ENCODE measurements at regions of chr17 and their contacts with region 1.

Region 1: DNA sequence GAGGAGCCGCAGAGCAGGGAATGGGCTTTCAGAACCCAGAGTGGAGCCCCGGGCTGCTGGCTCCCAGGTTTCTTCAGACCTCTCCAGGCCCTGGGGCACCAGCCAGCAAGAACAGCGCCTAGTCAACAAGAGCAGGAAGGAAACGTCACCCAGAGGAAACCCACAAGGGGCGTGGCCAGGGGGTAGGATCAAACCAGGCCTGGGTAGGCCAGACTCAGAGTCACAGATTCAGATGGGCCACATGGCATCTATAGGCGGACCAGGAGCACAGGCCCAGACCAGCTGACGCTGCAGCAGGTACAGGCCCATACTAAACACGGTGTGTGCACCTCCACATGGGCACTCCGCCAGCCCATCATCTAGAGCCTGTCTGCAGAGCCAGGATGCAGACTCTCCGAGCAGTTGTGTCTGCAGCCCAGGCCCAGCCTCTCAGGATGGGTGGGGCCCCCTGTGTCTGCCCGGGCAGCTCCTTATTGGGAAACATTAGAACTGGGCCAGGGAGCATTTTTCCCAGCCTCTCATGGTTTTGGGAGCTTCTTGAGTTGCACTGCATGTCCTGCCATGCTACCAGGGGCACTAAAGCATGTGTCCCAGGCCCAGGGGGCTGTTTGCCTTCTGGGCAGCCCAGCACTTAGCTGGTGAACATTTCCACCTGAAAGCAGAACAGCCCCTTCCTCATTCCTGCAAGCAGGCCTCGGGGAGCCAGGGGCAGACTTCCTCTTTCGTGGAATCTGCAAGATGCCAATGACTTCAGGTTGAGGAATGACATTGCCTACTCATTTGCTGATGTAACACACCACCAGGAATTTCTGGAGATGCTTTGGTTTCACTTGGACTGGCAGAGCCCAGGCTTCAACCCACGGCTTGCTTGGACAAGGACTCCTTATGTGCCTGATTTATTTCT is at the start of gene NLRP1:
- DNase-seq: peak; percentile 93
- H3K4me3 Mint-ChIP-seq: peak within 1 kb of the TSS; percentile 95
- H3K27ac Mint-ChIP-seq: peak within 1 kb of the TSS; percentile 93
- H3K4me1 Mint-ChIP-seq: peaks cover 49% of the 10 kb centered on the region
- H3K27me3 Mint-ChIP-seq: peaks cover 3% of the 10 kb centered on the region
- total RNA-seq, gene NLRP1: 26.0 and 29.6 TPM in 2 replicates

Region 2: GRCh38 chr17:5500589-5501391 is 83.8 kb before region 1 on chr17:
- intact Hi-C with region 1: loop called (anchors 5 kb)
- DNase-seq: peak; percentile 63
- H3K4me3 Mint-ChIP-seq: peak overlapping the region; percentile 94
- H3K27ac Mint-ChIP-seq: peak overlapping the region; percentile 59
- H3K4me1 Mint-ChIP-seq: peaks cover 11% of the 10 kb centered on the region
- H3K27me3 Mint-ChIP-seq: peaks cover 3% of the 10 kb centered on the region

Region 3: DNA sequence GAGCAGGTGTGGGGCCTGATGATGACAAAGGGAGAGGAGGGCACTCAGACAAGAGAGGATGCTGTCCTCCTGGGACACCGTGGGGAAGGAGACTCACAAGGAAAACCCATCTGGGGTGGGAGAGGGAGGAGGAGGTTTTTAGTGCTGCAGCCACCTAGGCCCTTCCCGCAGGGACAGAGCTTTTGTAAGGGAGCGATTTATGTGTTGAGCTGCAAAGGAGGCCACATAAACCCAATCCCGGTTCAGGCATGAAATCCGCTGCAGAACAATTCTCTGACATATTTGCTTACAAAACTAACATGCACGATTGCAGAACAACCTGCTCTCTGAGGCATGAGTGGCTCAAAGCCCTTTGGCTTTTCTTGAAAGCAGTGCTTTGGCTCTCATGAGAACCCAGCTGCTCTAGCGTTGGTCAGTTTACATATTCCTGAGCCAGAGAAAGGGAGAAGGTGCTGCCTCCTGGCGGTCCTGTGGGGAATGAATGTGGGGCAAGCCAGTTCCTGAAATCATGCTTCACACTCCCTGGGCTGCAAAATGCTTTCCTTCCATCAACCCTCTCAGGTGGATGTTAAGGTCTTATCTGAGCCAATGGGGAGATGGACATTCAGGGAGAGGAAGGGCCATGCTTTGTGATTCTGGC is 122.1 kb after region 1 on chr17:
- intact Hi-C with region 1: loop called (anchors 1 kb)
- DNase-seq: peak; percentile 21
- H3K4me3 Mint-ChIP-seq: no peak overlapping the region
- H3K27ac Mint-ChIP-seq: no peak overlapping the region
- H3K4me1 Mint-ChIP-seq: no peaks in the 10 kb centered on the region
- H3K27me3 Mint-ChIP-seq: peaks cover 5% of the 10 kb centered on the region

Region 4: GRCh38 chr17:6427279-6427781 is 842.7 kb after region 1 on chr17:
- intact Hi-C with region 1: loop called (anchors 1 kb)
- DNase-seq: peak; percentile 74
- H3K4me3 Mint-ChIP-seq: peak overlapping the region; percentile 21
- H3K27ac Mint-ChIP-seq: peak overlapping the region; percentile 73
- H3K4me1 Mint-ChIP-seq: peaks cover 19% of the 10 kb centered on the region
- H3K27me3 Mint-ChIP-seq: peaks cover 51% of the 10 kb centered on the region

Region 5: GRCh38 chr17:6640536-6641373 is 1056.1 kb after region 1 on chr17 and contains the starts of genes KIAA0753 and TXNDC17:
- intact Hi-C with region 1: loop called (anchors 5 kb)
- DNase-seq: peak; percentile 94
- H3K4me3 Mint-ChIP-seq: peak within 1 kb of the TSS; percentile 97
- H3K27ac Mint-ChIP-seq: peak within 1 kb of the TSS; percentile 99
- H3K4me1 Mint-ChIP-seq: peaks cover 60% of the 10 kb centered on the region
- H3K27me3 Mint-ChIP-seq: no peaks in the 10 kb centered on the region
- total RNA-seq, gene KIAA0753: 18.2 and 22.2 TPM in 2 replicates
- total RNA-seq, gene TXNDC17: 94.0 and 95.2 TPM in 2 replicates

Region 6: DNA sequence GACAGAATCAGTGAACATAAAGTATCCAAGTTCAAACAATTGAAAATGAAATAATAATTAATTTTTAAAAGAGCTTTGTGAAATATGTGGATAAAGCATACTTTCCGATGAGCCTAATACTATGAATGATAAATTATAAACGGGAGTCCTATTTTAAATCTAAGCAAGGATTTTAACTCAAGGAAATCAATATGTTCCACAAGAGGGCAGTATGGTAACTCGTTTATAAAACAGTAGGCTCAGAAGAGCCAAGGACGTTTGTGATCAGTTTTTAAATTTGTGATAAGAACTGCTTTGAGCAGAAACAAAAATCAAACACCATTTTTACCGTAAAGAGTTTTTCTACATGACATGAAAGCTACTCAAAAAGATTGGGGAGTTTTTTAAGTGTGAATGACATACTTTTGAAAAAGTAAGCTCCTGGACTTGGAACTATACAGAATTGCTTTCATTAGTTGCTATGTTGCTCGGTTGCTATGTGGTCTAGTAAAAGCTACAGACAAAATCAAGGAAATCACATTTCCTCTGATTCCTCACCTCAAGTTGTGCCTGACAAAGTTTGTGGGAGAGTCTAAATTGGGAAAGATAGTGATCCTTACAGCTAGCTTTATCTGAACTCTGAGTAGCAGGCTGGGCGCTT is 1258.7 kb after region 1 on chr17:
- intact Hi-C with region 1: loop called (anchors 1 kb)
- DNase-seq: no peak
- H3K4me3 Mint-ChIP-seq: no peak overlapping the region
- H3K27ac Mint-ChIP-seq: no peak overlapping the region
- H3K4me1 Mint-ChIP-seq: peaks cover 13% of the 10 kb centered on the region
- H3K27me3 Mint-ChIP-seq: peaks cover 46% of the 10 kb centered on the region